Activated B cell treated with CpG ODN at 0.5 μM for 24 hours (primary cell): ENCODE measurements at regions of chr1 and their contacts with region 1.

Region 1: DNA sequence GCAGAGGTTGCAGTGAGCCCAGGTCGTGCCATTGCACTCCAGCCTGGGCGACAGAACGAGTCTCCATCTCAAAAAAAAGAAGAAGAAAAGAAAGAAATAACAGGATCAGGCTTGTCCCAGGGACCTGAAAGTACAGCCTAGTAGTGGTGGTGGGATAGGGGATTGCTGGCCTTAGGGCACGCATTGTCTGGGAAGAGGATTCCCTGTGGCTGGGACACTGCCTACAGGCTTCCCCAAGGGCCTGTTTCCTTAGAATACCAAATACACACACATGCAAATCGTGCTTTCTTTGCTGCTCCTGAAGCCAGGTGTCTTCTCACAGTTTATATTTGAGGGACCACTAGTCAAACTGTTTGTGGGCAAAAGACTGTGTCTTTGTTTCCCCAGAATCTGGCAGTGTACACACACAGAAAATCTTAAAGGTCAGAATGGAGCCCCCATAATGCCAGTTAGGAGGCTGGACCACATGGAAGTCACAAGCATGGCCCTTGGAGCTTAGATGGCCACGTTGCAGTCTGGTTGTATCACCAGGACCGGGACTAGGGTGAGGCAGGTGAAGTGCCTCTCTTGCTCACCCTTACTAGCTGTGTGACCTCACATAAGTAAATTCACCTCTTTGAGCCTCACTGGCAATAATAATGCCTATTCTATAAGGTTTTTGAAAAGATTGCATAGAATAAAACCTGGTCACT is 12.7 kb upstream of the ASAP3 start:
- DNase-seq: no peak
- ATAC-seq: no peak
- H3K4me3 Mint-ChIP-seq: no peak overlapping the region
- H3K27ac Mint-ChIP-seq: no peak overlapping the region
- H3K4me1 Mint-ChIP-seq: peaks cover 15% of the 10 kb centered on the region
- H3K27me3 Mint-ChIP-seq: peaks cover 7% of the 10 kb centered on the region
- CTCF ChIP-seq: no peak

Region 2: GRCh38 chr1:23477745-23478144 is 18.9 kb before region 1 on chr1:
- CTCF ChIA-PET with region 1: no interaction called
- POLR2A ChIA-PET with region 1: interaction called, 20 read pairs
- intact Hi-C with region 1: no loop called
- DNase-seq: no peak
- ATAC-seq: no peak
- H3K4me3 Mint-ChIP-seq: no peak overlapping the region
- H3K27ac Mint-ChIP-seq: no peak overlapping the region
- H3K4me1 Mint-ChIP-seq: peaks cover 14% of the 10 kb centered on the region
- H3K27me3 Mint-ChIP-seq: peaks cover 6% of the 10 kb centered on the region
- CTCF ChIP-seq: no peak

Region 3: DNA sequence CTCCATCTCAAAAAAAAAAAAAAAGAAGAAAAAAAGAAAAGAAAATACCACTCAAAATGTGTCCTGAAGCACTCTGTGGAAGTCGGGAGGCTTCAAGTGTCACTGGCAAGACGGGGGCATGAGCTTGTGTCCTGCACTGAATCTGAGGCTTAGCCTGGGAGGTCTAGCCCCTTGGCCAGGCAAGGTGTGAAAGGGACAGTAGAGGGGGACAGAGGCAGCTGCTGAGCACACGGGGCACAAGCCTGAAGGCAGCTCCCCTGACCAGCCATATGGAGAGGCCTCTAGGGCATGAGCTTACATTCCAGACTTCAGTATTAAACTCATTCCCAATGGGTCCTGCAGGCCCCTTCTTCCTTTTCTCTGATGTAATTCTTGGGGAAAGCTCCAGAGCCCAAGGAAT is 10.9 kb after region 1 on chr1:
- CTCF ChIA-PET with region 1: interaction called, 19 read pairs
- POLR2A ChIA-PET with region 1: no interaction called
- intact Hi-C with region 1: no loop called
- DNase-seq: no peak
- ATAC-seq: no peak
- H3K4me3 Mint-ChIP-seq: no peak overlapping the region
- H3K27ac Mint-ChIP-seq: no peak overlapping the region
- H3K4me1 Mint-ChIP-seq: no peaks in the 10 kb centered on the region
- H3K27me3 Mint-ChIP-seq: no peaks in the 10 kb centered on the region
- CTCF ChIP-seq: no peak

Region 4: GRCh38 chr1:23524716-23525401 is 28.2 kb after region 1 on chr1:
- CTCF ChIA-PET with region 1: interaction called, 94 read pairs
- POLR2A ChIA-PET with region 1: interaction called, 33 read pairs
- intact Hi-C with region 1: no loop called
- DNase-seq: peak; percentile 33
- ATAC-seq: peak; percentile 40
- H3K4me3 Mint-ChIP-seq: peak overlapping the region; percentile 46
- H3K27ac Mint-ChIP-seq: peak overlapping the region; percentile 87
- H3K4me1 Mint-ChIP-seq: peaks cover 79% of the 10 kb centered on the region
- H3K27me3 Mint-ChIP-seq: no peaks in the 10 kb centered on the region
- CTCF ChIP-seq: no peak

Region 5: DNA sequence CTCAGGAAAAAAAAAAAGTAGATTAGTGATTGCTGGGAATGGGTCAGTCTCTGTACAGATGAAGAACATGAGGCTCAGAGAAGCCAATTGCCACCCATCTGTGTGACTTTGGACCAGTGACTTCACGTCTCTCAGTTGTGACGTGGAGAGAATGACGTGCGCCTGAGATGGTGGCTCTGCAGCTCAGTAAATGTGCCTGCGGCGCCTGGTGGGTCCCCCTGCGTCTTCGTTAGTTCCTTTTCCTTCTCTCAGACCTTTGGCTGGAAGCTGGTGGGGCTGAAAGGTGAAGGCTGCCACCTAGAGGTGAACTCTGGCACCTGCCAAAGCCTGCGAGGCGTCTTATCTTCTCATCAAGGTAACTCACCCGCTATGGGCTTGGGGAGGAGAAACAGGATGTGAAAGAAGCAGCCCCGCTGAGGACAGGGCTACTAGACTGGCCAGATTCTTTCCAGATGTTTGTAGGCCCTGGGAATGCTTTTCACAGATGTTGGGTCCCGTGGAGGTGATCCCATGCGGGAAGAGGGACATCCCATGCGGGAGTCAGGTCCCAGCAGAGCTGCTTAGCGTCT is 43.1 kb after region 1 on chr1:
- CTCF ChIA-PET with region 1: interaction called, 279 read pairs
- POLR2A ChIA-PET with region 1: interaction called, 50 read pairs
- intact Hi-C with region 1: loop called (anchors 1 kb)
- DNase-seq: peak; percentile 84
- ATAC-seq: peak; percentile 92
- H3K4me3 Mint-ChIP-seq: peak overlapping the region; percentile 59
- H3K27ac Mint-ChIP-seq: peak overlapping the region; percentile 56
- H3K4me1 Mint-ChIP-seq: peaks cover 39% of the 10 kb centered on the region
- H3K27me3 Mint-ChIP-seq: no peaks in the 10 kb centered on the region
- CTCF ChIP-seq: peak; percentile 60

Region 6: DNA sequence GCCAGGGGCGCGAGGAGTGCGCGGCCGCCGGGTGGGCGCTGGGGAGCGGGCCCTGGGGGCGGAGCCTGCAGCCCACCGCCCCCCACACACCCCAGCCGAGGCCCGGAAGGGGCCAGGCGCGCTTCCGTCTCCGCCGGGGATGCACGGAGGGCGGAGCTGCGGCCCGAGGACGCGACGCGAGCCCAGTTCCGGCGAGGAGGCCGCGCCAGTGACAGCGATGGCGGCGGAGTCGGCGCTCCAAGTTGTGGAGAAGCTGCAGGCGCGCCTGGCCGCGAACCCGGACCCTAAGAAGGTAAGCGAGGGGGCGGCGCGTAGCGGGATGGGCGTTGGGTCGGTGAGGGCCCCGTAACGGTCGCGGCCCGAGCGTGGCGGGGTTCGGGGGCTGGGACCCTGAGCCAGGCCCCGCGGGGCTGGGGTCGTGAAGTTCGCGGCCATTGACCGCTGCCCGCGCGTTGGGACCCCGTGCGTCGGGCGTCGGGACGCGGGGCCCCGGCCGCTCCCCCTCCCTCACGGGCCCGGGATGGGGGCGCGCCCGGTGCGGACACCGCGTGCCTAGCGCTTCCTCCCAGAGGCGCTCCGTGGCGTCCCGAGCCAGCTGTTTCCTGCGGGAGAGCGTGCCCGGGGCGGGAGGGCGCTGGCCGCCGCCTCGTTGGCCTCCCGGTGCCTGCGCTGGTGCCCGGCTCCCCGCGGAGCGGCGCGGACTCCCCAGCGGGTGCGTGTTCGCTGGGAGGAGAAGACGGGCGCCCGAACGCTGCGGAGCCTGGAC is 246.8 kb after region 1 on chr1 and contains the start of gene ELOA:
- CTCF ChIA-PET with region 1: no interaction called
- POLR2A ChIA-PET with region 1: no interaction called
- intact Hi-C with region 1: loop called (anchors 5 kb)
- DNase-seq: peak; percentile 76
- ATAC-seq: peak; percentile 91
- H3K4me3 Mint-ChIP-seq: peak within 1 kb of the TSS; percentile 90
- H3K27ac Mint-ChIP-seq: peak within 1 kb of the TSS; percentile 89
- H3K4me1 Mint-ChIP-seq: peaks cover 52% of the 10 kb centered on the region
- H3K27me3 Mint-ChIP-seq: no peaks in the 10 kb centered on the region
- CTCF ChIP-seq: no peak
- total RNA-seq, gene ELOA: 70.2 and 72.6 TPM in 2 replicates